CD8-positive, alpha-beta T cell (primary cell): ENCODE measurements at regions of chr14 and their contacts with region 1.

Region 1: GRCh38 chr14:70640938-70641547 is 673 bp upstream of the TTC9 start:
- DNase-seq: peak in 7 of 9 experiments; percentile 30 to 79 (median 66)
- ATAC-seq: peak; percentile 66
- H3K4me3 ChIP-seq: peak overlapping the region; percentile 59 to 63
- H3K4me3 Mint-ChIP-seq: peak overlapping the region; percentile 99
- H3K27ac ChIP-seq: peak overlapping the region; percentile 24 to 26
- H3K27ac Mint-ChIP-seq: peak overlapping the region; percentile 97
- H3K4me1 ChIP-seq: peaks cover 33% of the 10 kb centered on the region
- H3K4me1 Mint-ChIP-seq: peaks cover 51% of the 10 kb centered on the region
- H3K27me3 ChIP-seq: no peaks in the 10 kb centered on the region
- H3K27me3 Mint-ChIP-seq: no peaks in the 10 kb centered on the region
- CTCF ChIP-seq: no peak

Region 2: GRCh38 chr14:70600382-70601157 is 40.5 kb before region 1 on chr14 and contains the start of gene MED6:
- CTCF ChIA-PET with region 1: no interaction called
- POLR2A ChIA-PET with region 1: interaction called, 5 read pairs
- intact Hi-C with region 1: loop called (anchors 2 kb)
- DNase-seq: peak; percentile 83 to 96 (median 94)
- ATAC-seq: peak; percentile 100
- H3K4me3 ChIP-seq: peak within 1 kb of the TSS; percentile 90 to 99
- H3K4me3 Mint-ChIP-seq: peak within 1 kb of the TSS; percentile 99
- H3K27ac ChIP-seq: peak within 1 kb of the TSS; percentile 92 to 96
- H3K27ac Mint-ChIP-seq: peak within 1 kb of the TSS; percentile 99
- H3K4me1 ChIP-seq: peaks cover 20% of the 10 kb centered on the region
- H3K4me1 Mint-ChIP-seq: peaks cover 30% of the 10 kb centered on the region
- H3K27me3 ChIP-seq: no peaks in the 10 kb centered on the region
- H3K27me3 Mint-ChIP-seq: no peaks in the 10 kb centered on the region
- CTCF ChIP-seq: no peak
- total RNA-seq, gene MED6: 116 to 119 TPM

Region 3: GRCh38 chr14:70655110-70655826 is 14.2 kb after region 1 on chr14:
- CTCF ChIA-PET with region 1: interaction called, 18 read pairs
- POLR2A ChIA-PET with region 1: interaction called, 34 read pairs
- intact Hi-C with region 1: loop called (anchors 1 to 2 kb)
- DNase-seq: peak; percentile 31 to 91 (median 79)
- ATAC-seq: peak; percentile 88
- H3K4me3 ChIP-seq: peak overlapping the region; percentile 32 to 46
- H3K4me3 Mint-ChIP-seq: peak overlapping the region; percentile 86
- H3K27ac ChIP-seq: peak overlapping the region; percentile 76 to 90
- H3K27ac Mint-ChIP-seq: peak overlapping the region; percentile 99
- H3K4me1 ChIP-seq: peaks cover 91% of the 10 kb centered on the region
- H3K4me1 Mint-ChIP-seq: peaks cover 93% of the 10 kb centered on the region
- H3K27me3 ChIP-seq: no peaks in the 10 kb centered on the region
- H3K27me3 Mint-ChIP-seq: no peaks in the 10 kb centered on the region
- CTCF ChIP-seq: no peak

Region 4: GRCh38 chr14:70670992-70671651 is 30.1 kb after region 1 on chr14:
- CTCF ChIA-PET with region 1: interaction called, 3 read pairs
- POLR2A ChIA-PET with region 1: interaction called, 3 read pairs
- intact Hi-C with region 1: loop called (anchors 5 kb)
- DNase-seq: no peak
- ATAC-seq: no peak
- H3K4me3 ChIP-seq: no peak overlapping the region
- H3K4me3 Mint-ChIP-seq: no peak overlapping the region
- H3K27ac ChIP-seq: no peak overlapping the region
- H3K27ac Mint-ChIP-seq: no peak overlapping the region
- H3K4me1 ChIP-seq: peaks cover 17% of the 10 kb centered on the region
- H3K4me1 Mint-ChIP-seq: peaks cover 20% of the 10 kb centered on the region
- H3K27me3 ChIP-seq: no peaks in the 10 kb centered on the region
- H3K27me3 Mint-ChIP-seq: no peaks in the 10 kb centered on the region
- CTCF ChIP-seq: no peak

Region 5: GRCh38 chr14:70809543-70810244 is 168.7 kb after region 1 on chr14:
- CTCF ChIA-PET with region 1: no interaction called
- POLR2A ChIA-PET with region 1: interaction called, 3 read pairs
- intact Hi-C with region 1: loop called in 1 of 2 experiments (anchors 5 kb)
- DNase-seq: peak; percentile 70 to 95 (median 87)
- ATAC-seq: peak; percentile 79
- H3K4me3 ChIP-seq: peak overlapping the region; percentile 58 to 65
- H3K4me3 Mint-ChIP-seq: no peak overlapping the region
- H3K27ac ChIP-seq: peak overlapping the region; percentile 30 to 56
- H3K27ac Mint-ChIP-seq: peak overlapping the region; percentile 80
- H3K4me1 ChIP-seq: peaks cover 12% of the 10 kb centered on the region
- H3K4me1 Mint-ChIP-seq: peaks cover 10% of the 10 kb centered on the region
- H3K27me3 ChIP-seq: no peaks in the 10 kb centered on the region
- H3K27me3 Mint-ChIP-seq: no peaks in the 10 kb centered on the region
- CTCF ChIP-seq: no peak